Dorsolateral prefrontal cortex (tissue), 120 donors: ENCODE measurements at regions of chr16 and their contacts with region 1.

Region 1: GRCh38 chr16:57757326-57757786 is 21.8 kb downstream of the KATNB1 start:
- DNase-seq: peak; percentile 76 to 90 (median 84)
- H3K4me3 ChIP-seq: no peak overlapping the region
- H3K27ac ChIP-seq: peak overlapping the region in 37 of 59 donors; percentile 5 to 85 (median 52)
- H3K27me3 ChIP-seq: no peaks in the 10 kb centered on the region
- CTCF ChIP-seq: peak; percentile 68 to 99 (median 96)

Region 2: DNA sequence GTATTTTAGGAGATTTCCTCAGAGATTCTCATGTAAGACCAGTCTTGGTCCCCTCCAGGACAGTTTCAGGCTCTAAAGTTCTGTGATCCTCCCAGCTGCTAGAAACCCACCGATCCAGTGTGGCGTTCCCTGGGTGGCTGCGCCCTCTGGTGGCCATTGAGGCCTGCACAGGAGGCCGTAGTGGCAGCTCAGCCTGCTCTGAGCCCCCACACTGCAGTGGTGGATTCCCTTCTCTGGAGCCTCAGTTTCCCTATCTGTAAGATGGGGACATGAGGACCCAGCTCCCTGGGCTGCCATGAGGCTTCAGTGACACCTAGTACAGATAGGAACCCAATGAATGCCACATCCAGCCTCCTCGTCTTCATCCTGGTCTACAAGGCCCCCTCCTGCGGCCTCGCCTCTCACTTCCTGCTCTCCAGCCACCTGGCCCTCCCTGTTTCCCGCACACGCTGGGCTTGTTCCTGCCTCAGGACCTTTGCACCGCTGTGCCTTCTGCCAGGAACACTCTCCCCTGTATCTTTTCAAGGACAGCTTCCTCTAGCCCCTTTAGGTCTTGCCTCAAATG is 237.5 kb before region 1 on chr16:
- intact Hi-C with region 1: no loop called
- DNase-seq: peak in 9 of 10 donors; percentile 76 to 88 (median 80)
- H3K4me3 ChIP-seq: no peak overlapping the region
- H3K27ac ChIP-seq: no peak overlapping the region
- H3K27me3 ChIP-seq: no peaks in the 10 kb centered on the region
- CTCF ChIP-seq: peak; percentile 78 to 98 (median 95)

Region 3: GRCh38 chr16:57689762-57690558 is 67.4 kb before region 1 on chr16:
- intact Hi-C with region 1: no loop called
- DNase-seq: no peak
- H3K4me3 ChIP-seq: no peak overlapping the region
- H3K27ac ChIP-seq: no peak overlapping the region
- H3K27me3 ChIP-seq: peaks cover 0 to 5% (median 0%) of the 10 kb centered on the region in 45 donors
- CTCF ChIP-seq: no peak

Region 4: DNA sequence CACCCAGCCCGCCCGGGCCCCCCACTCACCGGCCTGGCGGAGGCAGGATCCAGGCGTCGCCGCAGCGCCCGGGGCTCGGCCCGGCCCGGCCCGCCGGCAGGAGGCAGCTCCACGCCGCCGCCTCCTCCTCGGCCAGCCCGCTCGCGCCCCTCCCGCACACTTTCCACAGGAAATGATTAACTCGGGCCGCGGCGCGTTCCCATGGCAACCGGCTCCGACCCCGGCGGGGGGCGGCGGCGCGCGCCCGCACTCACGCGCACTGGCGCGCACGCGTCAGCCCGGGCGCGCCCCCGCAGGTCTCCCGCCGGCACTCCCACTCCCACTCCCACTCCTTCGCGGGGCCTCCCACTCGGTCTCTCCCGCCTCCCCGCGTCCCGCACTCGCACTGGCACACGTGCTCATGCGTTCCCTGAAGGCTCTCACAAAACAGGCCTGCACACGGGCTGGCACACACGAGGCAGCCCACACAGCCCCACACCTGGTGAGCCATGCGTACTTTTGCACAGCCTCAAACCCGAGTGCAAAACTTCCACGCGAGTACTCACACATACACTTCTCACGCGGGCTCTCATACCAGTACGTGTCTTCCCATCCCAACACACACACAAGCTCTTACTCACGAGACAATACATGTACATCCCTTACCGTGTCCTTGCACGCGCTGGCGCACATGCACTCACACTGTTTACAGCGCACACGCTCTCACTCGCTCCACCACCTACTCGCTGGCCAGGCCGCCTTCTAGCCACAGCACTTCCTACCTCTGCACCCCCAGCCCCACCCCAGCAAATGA is 45.2 kb after region 1 on chr16 and contains the start of gene KIFC3:
- intact Hi-C with region 1: loop called in 1 of 2 experiments (anchors 5 kb)
- DNase-seq: peak; percentile 49 to 92 (median 86)
- H3K4me3 ChIP-seq: peak within 1 kb of the TSS; percentile 55 to 89 (median 73)
- H3K27ac ChIP-seq: peak within 1 kb of the TSS; percentile 84 to 99 (median 94)
- H3K27me3 ChIP-seq: no peaks in the 10 kb centered on the region
- CTCF ChIP-seq: peak in 34 of 56 donors; percentile 7 to 70 (median 48)
- total RNA-seq, gene KIFC3: 29.4 to 72.9 (median 48.3) TPM